ENCODE measurements at regions of chr19 and their contacts with region 1.

Region 1: GRCh38 chr19:58326914-58327726 is at the start of gene ZSCAN22:
- DNase-seq: peak; percentile 95
- H3K4me3 ChIP-seq: peak within 1 kb of the TSS; percentile 82
- H3K27ac ChIP-seq: peak within 1 kb of the TSS; percentile 13
- H3K4me1 ChIP-seq: peaks cover 16% of the 10 kb centered on the region
- CTCF ChIP-seq: no peak
- total RNA-seq, gene ZSCAN22: 2.6 and 3.3 TPM in 2 replicates

Region 2: DNA sequence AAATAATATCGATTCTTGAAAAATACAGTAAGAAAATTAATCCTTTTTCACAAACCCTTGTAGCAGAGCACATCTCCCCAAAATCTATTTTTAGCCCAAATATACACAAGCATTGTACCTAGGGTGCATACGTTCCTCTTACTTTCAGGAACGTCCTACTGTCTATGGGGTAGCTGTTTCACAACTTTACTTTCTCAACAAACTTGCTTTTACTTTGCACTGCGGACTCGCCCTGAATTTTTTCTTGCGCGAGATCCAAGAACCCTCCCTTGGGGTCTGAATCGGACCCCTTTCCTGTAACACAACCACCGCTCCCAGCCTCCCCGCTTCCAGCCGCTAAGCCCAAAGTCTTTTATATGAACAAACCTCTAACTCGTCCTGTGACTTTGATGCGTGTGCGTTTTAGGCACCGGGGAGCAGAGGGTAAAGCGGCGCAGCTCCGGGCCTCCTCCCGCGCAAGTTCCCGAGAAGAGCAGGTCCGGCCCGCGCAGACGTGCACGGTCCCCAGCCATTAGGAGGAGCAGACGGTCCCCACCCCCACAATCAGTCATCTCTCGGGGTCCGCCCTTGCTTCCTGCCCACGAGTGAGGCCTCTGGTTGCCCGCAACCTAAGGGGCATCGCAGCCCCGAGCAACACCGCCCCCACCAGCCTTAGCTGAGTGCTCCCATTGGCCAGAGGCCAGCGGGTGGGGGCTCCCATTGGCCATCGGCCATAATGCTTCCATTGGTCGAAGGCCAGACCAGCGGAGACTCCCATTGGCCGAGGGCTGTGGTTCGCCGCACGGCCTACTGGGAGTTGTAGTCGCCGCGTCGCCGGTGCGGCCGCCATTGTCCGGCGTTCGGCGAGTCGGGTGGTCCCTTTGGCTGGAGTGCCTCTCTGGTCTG is 48.7 kb before region 1 on chr19 and contains the start of gene ZNF8:
- CTCF ChIA-PET with region 1: no interaction called
- POLR2A ChIA-PET with region 1: no interaction called
- intact Hi-C with region 1: loop called (anchors 2 kb)
- DNase-seq: peak; percentile 99
- H3K4me3 ChIP-seq: peak within 1 kb of the TSS; percentile 83
- H3K27ac ChIP-seq: peak within 1 kb of the TSS; percentile 52
- H3K4me1 ChIP-seq: peaks cover 18% of the 10 kb centered on the region
- CTCF ChIP-seq: no peak
- total RNA-seq, gene ZNF8: 7.3 and 7.8 TPM in 2 replicates

Region 3: GRCh38 chr19:58305065-58305931 is 21.8 kb before region 1 on chr19 and contains the start of gene ERVK3-1:
- CTCF ChIA-PET with region 1: no interaction called
- POLR2A ChIA-PET with region 1: interaction called, 4 read pairs
- intact Hi-C with region 1: loop called (anchors 1 kb)
- DNase-seq: peak; percentile 98
- H3K4me3 ChIP-seq: peak within 1 kb of the TSS; percentile 94
- H3K27ac ChIP-seq: peak within 1 kb of the TSS; percentile 46
- H3K4me1 ChIP-seq: peaks cover 15% of the 10 kb centered on the region
- CTCF ChIP-seq: no peak
- total RNA-seq, gene ERVK3-1: 61.7 and 79.6 TPM in 2 replicates

Region 4: GRCh38 chr19:58346961-58347931 is 20.1 kb after region 1 on chr19:
- CTCF ChIA-PET with region 1: no interaction called
- POLR2A ChIA-PET with region 1: no interaction called
- intact Hi-C with region 1: loop called (anchors 2 kb)
- DNase-seq: peak; percentile 89
- H3K4me3 ChIP-seq: peak overlapping the region; percentile 79
- H3K27ac ChIP-seq: peak overlapping the region; percentile 44
- H3K4me1 ChIP-seq: peaks cover 18% of the 10 kb centered on the region
- CTCF ChIP-seq: no peak

Region 5: GRCh38 chr19:58380722-58381466 is 53.8 kb after region 1 on chr19 and contains the start of gene ZNF837:
- CTCF ChIA-PET with region 1: no interaction called
- POLR2A ChIA-PET with region 1: no interaction called
- intact Hi-C with region 1: loop called (anchors 2 kb)
- DNase-seq: peak; percentile 100
- H3K4me3 ChIP-seq: peak within 1 kb of the TSS; percentile 71
- H3K27ac ChIP-seq: peak within 1 kb of the TSS; percentile 56
- H3K4me1 ChIP-seq: peaks cover 32% of the 10 kb centered on the region
- CTCF ChIP-seq: 0 out of 2 replicates have a peak, but pooled peaks have one; percentile 1
- total RNA-seq, gene ZNF837: 1.8 and 3.0 TPM in 2 replicates

Region 6: DNA sequence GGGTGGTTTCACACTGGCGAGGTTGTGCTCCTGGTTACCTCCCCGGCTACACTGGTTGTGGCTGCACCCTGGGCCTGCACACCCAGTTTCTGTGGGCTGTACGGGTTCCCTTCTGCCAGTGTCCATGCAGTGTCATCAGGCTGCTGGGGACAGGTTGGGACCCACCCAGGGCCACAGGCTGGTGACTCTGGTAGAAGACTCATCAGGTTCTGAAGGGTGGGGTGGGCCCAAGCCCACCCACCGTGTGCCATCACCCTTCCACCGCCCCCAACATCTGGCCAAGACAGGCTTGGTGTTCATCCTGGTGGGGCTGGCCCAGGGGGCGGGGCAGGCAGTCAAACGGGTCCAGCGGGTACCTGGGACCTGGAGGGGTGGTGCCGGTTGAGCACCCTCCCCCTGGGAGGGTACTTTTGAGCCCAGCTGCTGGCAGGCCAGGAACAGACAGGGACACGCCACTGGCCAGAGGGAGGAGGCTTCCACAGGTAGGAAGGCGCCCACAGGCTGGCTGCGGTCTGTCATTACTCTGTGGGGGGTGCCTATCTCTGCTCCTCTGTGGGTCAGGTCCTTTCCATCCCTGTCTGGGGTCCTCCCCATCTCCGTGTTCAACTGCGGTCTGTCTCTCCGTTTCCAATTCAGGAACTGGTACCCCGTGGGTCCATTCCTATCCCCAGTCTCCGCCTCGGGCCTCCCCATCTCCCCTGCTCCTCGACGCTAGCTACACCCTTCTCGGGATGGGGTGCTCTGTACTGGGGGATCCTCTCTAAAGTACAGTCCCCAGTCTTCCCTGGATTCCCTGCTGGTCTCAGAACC is 68.3 kb after region 1 on chr19 and contains the start of gene RNF225:
- CTCF ChIA-PET with region 1: no interaction called
- POLR2A ChIA-PET with region 1: no interaction called
- intact Hi-C with region 1: no loop called
- DNase-seq: no peak
- H3K4me3 ChIP-seq: no peak within 1 kb of the TSS
- H3K27ac ChIP-seq: no peak within 1 kb of the TSS
- H3K4me1 ChIP-seq: no peaks in the 10 kb centered on the region
- CTCF ChIP-seq: no peak
- total RNA-seq, gene RNF225: 0.75 and 2.1 TPM in 2 replicates

Region 7: DNA sequence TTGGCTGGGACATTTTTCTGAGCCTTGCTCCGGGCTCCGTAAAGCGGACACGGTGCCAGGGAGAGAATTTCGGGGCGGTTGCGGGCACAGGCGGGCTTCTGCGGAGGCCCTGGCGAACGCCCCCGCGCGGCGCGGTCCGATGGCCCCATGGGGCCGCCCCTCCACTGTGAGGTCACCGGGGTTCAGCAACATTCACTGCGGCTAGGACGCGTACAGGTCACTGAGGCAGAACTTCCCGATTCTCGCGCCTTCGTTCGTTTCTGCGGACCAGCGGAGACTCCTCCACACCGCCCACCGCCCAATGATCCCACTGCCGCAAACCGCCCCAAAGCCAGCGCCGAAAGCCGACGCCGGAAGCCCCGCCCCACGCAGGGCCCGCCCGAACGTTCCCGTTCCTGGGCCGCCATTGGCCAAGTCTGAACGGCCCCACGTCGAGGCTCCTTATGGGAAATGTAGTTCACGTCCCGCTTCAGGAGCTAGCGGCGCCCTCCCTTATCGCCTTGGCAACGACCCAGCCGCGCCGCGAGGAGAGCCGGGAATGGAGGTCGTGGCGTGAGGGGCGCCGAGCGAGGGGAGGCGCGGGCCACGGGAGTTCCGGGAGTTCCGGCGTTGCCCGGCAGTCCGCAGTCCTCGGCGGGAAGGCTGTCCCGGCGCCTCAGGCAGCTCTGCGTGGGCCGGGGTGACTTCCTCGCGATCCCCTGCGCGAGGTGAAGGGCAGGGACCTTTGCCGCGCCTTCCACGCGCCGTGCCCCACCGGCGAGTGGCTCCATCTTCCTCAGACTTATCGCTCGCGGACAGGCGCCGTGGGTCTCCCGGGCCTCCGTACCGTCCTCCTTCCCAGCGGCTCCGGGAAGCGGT is 81.3 kb after region 1 on chr19 and contains the start of gene ZNF584:
- CTCF ChIA-PET with region 1: no interaction called
- POLR2A ChIA-PET with region 1: no interaction called
- intact Hi-C with region 1: loop called (anchors 5 kb)
- DNase-seq: peak; percentile 97
- H3K4me3 ChIP-seq: peak within 1 kb of the TSS; percentile 83
- H3K27ac ChIP-seq: peak within 1 kb of the TSS; percentile 47
- H3K4me1 ChIP-seq: peaks cover 20% of the 10 kb centered on the region
- CTCF ChIP-seq: peak; percentile 45
- total RNA-seq, gene ZNF584: 9.8 and 12.4 TPM in 2 replicates

Region 8: GRCh38 chr19:58466760-58467589 is 139.9 kb after region 1 on chr19 and contains the start of gene ZNF324:
- CTCF ChIA-PET with region 1: no interaction called
- POLR2A ChIA-PET with region 1: no interaction called
- intact Hi-C with region 1: loop called (anchors 5 kb)
- DNase-seq: peak; percentile 99
- H3K4me3 ChIP-seq: peak within 1 kb of the TSS; percentile 81
- H3K27ac ChIP-seq: no peak within 1 kb of the TSS
- H3K4me1 ChIP-seq: peaks cover 12% of the 10 kb centered on the region
- CTCF ChIP-seq: peak; percentile 43; the same call in 1 of the 2 replicates
- total RNA-seq, gene ZNF324: 16.5 and 23.3 TPM in 2 replicates

Measured in OCI-LY7 (cell line).